PC-9 (cell line): ENCODE measurements at regions of chr3 and their contacts with region 1.

Region 1: DNA sequence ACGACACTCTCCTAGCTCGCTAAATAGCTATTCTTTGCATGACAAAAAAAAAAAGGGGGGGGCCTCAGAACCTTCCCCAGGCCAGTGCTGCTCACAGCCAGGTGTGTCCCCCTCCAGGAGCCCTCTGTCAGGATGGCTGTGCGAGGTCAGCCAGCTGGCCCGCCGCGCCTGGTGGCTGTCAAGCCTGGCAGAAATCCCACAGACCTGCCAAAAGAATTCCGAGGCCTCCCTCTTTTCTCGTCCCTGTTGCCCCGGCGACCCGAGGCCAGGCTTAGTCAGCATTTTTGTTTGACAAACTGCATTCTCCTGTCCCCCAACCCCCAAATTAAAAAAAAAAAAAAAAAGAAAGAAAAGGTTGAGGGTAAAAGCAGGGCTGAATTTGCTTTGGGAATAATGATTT is 61.9 kb downstream of the TM4SF4 start:
- DNase-seq: no peak
- H3K4me3 ChIP-seq: no peak overlapping the region
- H3K27ac ChIP-seq: no peak overlapping the region
- H3K4me1 ChIP-seq: no peaks in the 10 kb centered on the region
- H3K27me3 ChIP-seq: no peaks in the 10 kb centered on the region
- CTCF ChIP-seq: no peak

Region 2: GRCh38 chr3:149407898-149408297 is 128.5 kb before region 1 on chr3:
- CTCF ChIA-PET with region 1: no interaction called
- POLR2A ChIA-PET with region 1: no interaction called
- intact Hi-C with region 1: no loop called
- DNase-seq: no peak
- H3K4me3 ChIP-seq: no peak overlapping the region
- H3K27ac ChIP-seq: no peak overlapping the region
- H3K4me1 ChIP-seq: 0 out of 2 replicates have a peak, but pooled peaks cover 4% of the 10 kb centered on the region
- H3K27me3 ChIP-seq: no peaks in the 10 kb centered on the region
- CTCF ChIP-seq: no peak

Region 3: GRCh38 chr3:149547938-149548668 is 11.7 kb after region 1 on chr3:
- CTCF ChIA-PET with region 1: interaction called, 4 read pairs
- POLR2A ChIA-PET with region 1: no interaction called
- intact Hi-C with region 1: loop called (anchors 1 kb)
- DNase-seq: peak; percentile 49 to 74
- H3K4me3 ChIP-seq: no peak overlapping the region
- H3K27ac ChIP-seq: peak overlapping the region; percentile 41; the same call in 1 of the 2 replicates
- H3K4me1 ChIP-seq: no peaks in the 10 kb centered on the region
- H3K27me3 ChIP-seq: no peaks in the 10 kb centered on the region
- CTCF ChIP-seq: no peak

Region 4: DNA sequence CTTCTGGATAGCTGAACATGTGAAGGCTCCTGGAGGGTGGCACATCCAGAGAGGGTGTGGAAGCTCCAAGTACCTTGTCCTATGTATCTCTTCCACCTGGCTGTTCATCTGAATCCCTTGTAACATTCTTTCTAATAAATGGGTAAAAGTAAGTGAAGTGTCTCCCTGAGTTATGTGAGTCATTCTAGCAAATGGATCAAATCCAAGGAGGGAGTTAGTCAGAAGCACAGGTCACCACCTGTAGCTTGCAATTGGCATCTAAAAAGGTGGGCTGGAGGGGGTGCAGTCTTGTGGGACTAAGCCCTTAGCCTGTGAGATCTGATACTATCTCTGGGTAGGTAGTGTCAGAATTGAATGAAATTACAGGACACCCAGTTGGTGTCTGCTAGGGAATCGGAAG is 50.4 kb after region 1 on chr3:
- CTCF ChIA-PET with region 1: no interaction called
- POLR2A ChIA-PET with region 1: interaction called, 13 read pairs
- intact Hi-C with region 1: no loop called
- DNase-seq: peak; percentile 61 to 80
- H3K4me3 ChIP-seq: no peak overlapping the region
- H3K27ac ChIP-seq: peak overlapping the region; percentile 62
- H3K4me1 ChIP-seq: peaks cover 68% of the 10 kb centered on the region
- H3K27me3 ChIP-seq: no peaks in the 10 kb centered on the region
- CTCF ChIP-seq: no peak

Region 5: DNA sequence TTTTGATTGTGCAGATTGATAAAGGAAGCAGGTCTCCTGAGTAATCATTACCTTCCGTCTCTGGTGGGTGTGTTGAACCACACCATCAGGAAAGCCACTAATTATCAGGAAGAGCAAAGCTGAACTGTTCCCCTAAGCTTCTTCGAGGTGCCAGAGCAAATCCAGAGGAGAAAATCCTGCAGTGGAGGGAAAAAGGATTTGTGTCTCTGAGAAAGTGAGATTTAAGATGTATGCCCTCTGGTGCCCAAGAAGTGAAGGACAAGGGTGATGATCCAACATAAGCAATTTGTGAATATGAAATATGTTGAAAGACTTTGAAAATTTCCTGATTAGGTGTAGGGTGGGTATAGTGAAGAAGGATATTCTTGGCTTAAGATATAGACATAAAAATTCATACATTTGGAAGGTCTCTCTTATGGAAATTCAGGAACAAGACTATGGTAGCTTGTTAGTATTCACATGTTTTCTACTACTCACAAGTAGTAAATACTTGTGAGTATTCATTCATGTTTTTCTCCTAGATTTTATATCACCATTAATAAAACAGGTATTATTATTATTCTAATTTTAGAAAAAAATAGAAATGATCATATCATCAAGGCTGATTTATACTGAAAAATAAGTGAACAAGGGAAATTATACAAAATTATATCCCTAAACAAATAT is 181.1 kb after region 1 on chr3:
- CTCF ChIA-PET with region 1: no interaction called
- POLR2A ChIA-PET with region 1: no interaction called
- intact Hi-C with region 1: loop called (anchors 2 kb)
- DNase-seq: peak; percentile 58 to 61
- H3K4me3 ChIP-seq: no peak overlapping the region
- H3K27ac ChIP-seq: no peak overlapping the region
- H3K4me1 ChIP-seq: 0 out of 2 replicates have a peak, but pooled peaks cover 4% of the 10 kb centered on the region
- H3K27me3 ChIP-seq: no peaks in the 10 kb centered on the region
- CTCF ChIP-seq: peak; percentile 81

Region 6: DNA sequence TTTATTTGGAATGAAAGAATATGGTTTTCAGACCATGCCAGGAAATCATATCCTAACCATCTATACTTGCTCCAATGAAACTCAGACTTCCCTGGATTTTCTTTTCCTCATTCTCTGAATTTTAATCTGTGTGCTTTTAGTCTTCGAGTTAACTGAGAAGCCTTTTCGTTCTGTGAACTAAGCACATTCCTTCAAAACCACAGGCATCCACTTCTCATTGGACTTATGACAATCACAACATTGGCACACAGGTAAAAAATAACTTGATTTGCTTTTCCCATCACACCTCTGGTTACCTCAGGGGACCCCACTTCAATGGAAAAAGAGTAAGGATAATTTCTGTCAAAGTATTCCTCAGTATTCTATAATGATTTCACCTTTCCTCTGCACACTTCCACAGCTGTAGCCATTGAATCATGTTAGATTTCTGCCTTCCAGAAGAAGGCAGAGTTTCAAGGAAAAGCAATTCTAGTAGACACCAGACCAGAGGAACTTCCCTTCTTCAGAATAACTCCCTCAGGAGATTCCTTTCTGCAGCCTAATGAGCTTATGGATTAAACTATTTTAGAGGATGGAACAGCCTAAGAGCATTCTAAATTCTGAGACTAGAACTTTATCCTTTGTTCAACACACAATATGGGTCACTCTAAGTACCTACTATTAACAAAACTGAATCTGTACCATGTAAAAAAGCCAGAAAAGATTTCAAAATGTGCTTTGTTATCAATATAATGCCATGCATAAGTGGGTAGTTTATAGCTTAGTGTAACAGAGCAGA is 199.9 kb after region 1 on chr3:
- CTCF ChIA-PET with region 1: interaction called, 15 read pairs
- POLR2A ChIA-PET with region 1: no interaction called
- intact Hi-C with region 1: loop called (anchors 1 kb)
- DNase-seq: peak; percentile 57 to 90
- H3K4me3 ChIP-seq: no peak overlapping the region
- H3K27ac ChIP-seq: peak overlapping the region; percentile 81
- H3K4me1 ChIP-seq: peaks cover 27% of the 10 kb centered on the region
- H3K27me3 ChIP-seq: no peaks in the 10 kb centered on the region
- CTCF ChIP-seq: no peak